Body of pancreas (tissue), 4 donors: ENCODE measurements at regions of chr4 and their contacts with region 1.

Region 1: DNA sequence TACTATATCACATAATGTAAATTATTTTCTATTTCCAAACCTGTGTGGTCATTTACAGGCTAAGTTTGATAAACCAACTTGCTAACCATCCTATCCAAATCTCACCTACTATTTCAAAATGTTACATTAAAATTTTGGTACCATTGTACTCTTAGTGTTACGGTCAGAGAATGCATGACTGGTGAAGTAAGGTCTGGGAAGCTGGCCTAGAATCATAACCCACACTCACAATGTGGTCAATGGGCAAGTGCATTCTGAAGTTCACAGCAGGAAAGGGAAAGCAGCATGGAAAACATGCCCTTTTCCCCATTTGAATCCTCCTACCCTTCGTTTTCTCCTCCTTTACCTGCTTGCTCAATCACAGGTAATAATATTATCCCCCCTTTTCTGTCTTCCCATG is 54.4 kb downstream of the PPP3CA start:
- DNase-seq: no peak
- ATAC-seq: no peak
- H3K4me3 ChIP-seq: no peak overlapping the region
- H3K27ac ChIP-seq: no peak overlapping the region
- H3K4me1 ChIP-seq: peaks cover 9% of the 10 kb centered on the region
- H3K27me3 ChIP-seq: no peaks in the 10 kb centered on the region
- CTCF ChIP-seq: no peak
- POLR2A ChIP-seq: no peak

Region 2: DNA sequence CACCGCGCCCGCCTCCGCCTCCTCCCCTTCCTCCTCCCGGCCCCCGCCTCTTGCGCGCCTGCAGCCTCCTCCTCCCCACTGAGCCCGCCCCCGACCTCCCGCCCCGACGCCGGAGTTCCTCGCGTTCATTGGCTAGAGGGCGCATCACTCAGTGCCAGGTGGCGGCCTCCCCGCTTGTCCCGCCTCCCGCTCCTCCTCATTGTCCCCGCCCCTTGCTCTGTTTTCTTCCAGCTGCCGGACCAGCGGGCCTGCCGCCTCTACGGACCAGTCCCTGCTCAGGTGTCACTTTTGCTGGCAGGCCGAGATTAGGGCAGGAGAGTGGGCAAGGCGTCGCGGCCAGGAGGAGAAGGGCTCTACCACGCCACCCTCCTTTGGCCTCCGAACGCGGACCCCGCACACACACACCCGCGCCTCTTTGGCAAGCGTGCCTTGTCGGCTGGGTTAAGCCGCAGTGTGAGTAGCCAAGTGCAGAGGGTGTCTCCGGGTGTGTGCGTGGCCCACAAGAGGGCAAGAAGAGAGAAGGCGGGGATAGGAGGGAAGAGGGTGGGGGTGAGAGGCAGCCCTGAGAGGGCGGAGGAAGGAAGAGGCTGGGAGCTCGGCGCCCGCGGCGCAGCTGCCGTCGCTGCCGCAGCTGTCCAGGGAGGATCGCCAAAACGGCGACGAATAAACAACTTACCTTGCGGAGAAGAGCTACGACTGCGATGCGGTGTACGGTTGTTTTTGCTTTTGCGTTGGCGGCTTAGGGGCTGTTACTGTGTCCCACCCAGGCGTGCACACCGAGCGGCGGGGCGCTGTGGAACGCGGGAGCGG is 54.9 kb after region 1 on chr4:
- intact Hi-C with region 1: loop called (anchors 10 kb)
- DNase-seq: peak; percentile 99 to 100 (median 99)
- ATAC-seq: peak; percentile 90
- H3K4me3 ChIP-seq: peak overlapping the region; percentile 22 to 63
- H3K27ac ChIP-seq: peak overlapping the region; percentile 94 to 99 (median 96)
- H3K4me1 ChIP-seq: peaks cover 25% of the 10 kb centered on the region
- H3K27me3 ChIP-seq: no peaks in the 10 kb centered on the region
- CTCF ChIP-seq: peak in 4 of 7 experiments; percentile 19 to 41 (median 32)
- POLR2A ChIP-seq: peak; percentile 77 to 98 (median 95)